ENCODE measurements at regions of chr18 and their contacts with region 1.

Region 1: DNA sequence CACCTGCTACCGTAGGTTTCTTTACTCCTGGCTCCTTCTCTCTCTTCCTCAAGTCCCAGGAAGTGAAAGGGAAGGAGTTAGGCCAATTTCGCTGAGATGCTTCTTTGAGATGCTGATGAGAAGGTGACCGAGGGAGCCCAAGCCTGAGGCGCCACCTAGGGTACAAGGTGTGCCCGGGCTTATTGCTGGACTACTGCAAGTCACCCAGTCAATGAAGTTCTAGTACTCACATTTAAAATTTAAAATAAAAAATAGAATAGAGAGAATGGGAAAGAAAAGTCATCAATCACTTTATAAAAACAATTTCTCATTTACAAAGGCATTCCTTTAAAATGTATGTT is 45.3 kb downstream of the ACAA2 start:
- DNase-seq: peak; percentile 39
- ATAC-seq: peak; percentile 88
- H3K4me3 ChIP-seq: no peak overlapping the region
- H3K27ac ChIP-seq: no peak overlapping the region
- H3K4me1 ChIP-seq: no peaks in the 10 kb centered on the region
- H3K27me3 ChIP-seq: no peaks in the 10 kb centered on the region
- CTCF ChIP-seq: peak; percentile 72

Region 2: GRCh38 chr18:49510393-49511115 is 257.5 kb before region 1 on chr18:
- CTCF ChIA-PET with region 1: no interaction called
- POLR2A ChIA-PET with region 1: no interaction called
- in situ Hi-C with region 1: no loop called
- intact Hi-C with region 1: loop called (anchors 10 kb)
- DNase-seq: no peak
- ATAC-seq: peak; percentile 92
- H3K4me3 ChIP-seq: no peak overlapping the region
- H3K27ac ChIP-seq: no peak overlapping the region
- H3K4me1 ChIP-seq: no peaks in the 10 kb centered on the region
- H3K27me3 ChIP-seq: no peaks in the 10 kb centered on the region
- CTCF ChIP-seq: peak; percentile 79

Region 3: DNA sequence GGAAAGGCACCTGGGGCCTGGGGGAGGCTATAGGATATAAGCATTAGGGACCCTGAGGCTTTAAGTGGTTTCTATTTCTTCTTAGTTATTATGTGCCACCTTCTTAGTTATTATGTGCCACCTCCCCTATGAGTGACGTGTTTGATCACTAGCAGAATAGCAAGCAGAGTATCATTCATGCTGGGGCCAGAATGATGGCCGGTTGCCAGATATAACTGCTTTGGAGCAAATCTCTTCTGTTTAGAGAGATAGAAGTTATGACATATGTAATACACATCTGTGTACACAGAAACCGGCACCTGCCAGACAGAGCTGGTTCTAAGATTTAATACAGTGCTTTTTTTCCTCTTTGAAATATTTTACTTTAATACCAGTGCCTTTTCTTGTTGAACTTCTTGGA is 176.8 kb before region 1 on chr18:
- CTCF ChIA-PET with region 1: no interaction called
- POLR2A ChIA-PET with region 1: no interaction called
- in situ Hi-C with region 1: no loop called
- intact Hi-C with region 1: loop called (anchors 5 kb)
- DNase-seq: no peak
- ATAC-seq: no peak
- H3K4me3 ChIP-seq: no peak overlapping the region
- H3K27ac ChIP-seq: no peak overlapping the region
- H3K4me1 ChIP-seq: no peaks in the 10 kb centered on the region
- H3K27me3 ChIP-seq: no peaks in the 10 kb centered on the region
- CTCF ChIP-seq: no peak